Lower leg skin (tissue), 4 donors: ENCODE measurements at regions of chr6 and their contacts with region 1.

Region 1: GRCh38 chr6:31597006-31597405 is 4.2 kb upstream of the NCR3 start:
- DNase-seq: no peak
- H3K4me3 ChIP-seq: no peak overlapping the region
- CTCF ChIP-seq: no peak
- POLR2A ChIP-seq: no peak

Region 2: DNA sequence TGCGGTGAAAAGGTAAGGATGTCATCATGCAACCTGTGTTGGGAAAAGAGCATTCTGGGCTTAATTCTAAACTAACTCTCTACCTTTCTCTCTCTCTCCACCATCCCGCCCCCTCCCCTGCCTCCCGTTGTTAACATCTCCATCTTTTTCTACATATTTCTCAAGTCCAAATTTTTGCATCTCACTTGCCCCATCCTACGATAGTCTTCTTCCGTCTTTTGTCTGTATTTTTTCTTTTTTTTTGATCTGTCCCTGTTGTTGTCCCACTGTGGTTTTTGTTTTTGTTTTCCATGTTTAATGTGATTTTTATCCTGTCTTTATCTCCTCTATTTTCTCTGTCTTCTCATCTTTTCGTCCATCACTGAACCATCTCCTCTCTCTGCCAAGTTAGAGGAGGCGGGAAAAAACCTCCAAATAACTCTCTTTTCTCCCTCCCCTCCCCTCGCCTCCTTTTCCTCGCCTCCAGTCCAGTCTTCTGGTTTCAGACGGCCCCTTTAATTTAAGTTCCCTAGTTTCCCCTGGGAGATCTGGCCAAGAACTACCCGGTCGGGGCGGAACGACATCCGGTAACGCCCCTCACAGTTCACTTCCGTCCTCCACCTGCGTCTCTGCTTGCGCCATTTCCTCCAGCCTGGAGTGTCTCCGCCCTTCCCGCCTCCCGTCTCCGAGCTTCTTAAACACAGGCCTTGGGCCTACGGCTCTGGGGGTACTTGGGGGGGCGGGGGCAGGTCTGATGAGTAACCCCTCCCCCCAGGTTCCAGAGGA is 49.9 kb before region 1 on chr6 and contains the start of gene NFKBIL1:
- intact Hi-C with region 1: loop called (anchors 5 kb)
- DNase-seq: peak; percentile 96 to 99
- H3K4me3 ChIP-seq: no peak within 1 kb of the TSS
- CTCF ChIP-seq: no peak
- POLR2A ChIP-seq: no peak
- total RNA-seq, gene NFKBIL1: 25.2 to 44.4 (median 28.5) TPM